Activated CD8-positive, alpha-beta T cell treated with anti-CD3 and anti-CD28 coated beads, Interleukin-2, amount 10 ng/mL, durations not matched to agents 7 days and 5 days (primary cell): ENCODE measurements at regions of chr2 and their contacts with region 1.

Region 1: GRCh38 chr2:95389245-95390119 is 13.0 kb upstream of the FAHD2A start:
- DNase-seq: peak; percentile 69
- ATAC-seq: peak; percentile 82
- H3K4me3 Mint-ChIP-seq: no peak overlapping the region
- H3K27ac Mint-ChIP-seq: no peak overlapping the region
- H3K4me1 Mint-ChIP-seq: no peaks in the 10 kb centered on the region
- H3K27me3 Mint-ChIP-seq: peaks cover 2% of the 10 kb centered on the region

Region 2: GRCh38 chr2:95379371-95379831 is 10.1 kb before region 1 on chr2:
- CTCF ChIA-PET with region 1: interaction called, 11 read pairs
- POLR2A ChIA-PET with region 1: no interaction called
- DNase-seq: no peak
- ATAC-seq: peak; percentile 38
- H3K4me3 Mint-ChIP-seq: no peak overlapping the region
- H3K27ac Mint-ChIP-seq: no peak overlapping the region
- H3K4me1 Mint-ChIP-seq: peaks cover 7% of the 10 kb centered on the region
- H3K27me3 Mint-ChIP-seq: no peaks in the 10 kb centered on the region

Region 3: DNA sequence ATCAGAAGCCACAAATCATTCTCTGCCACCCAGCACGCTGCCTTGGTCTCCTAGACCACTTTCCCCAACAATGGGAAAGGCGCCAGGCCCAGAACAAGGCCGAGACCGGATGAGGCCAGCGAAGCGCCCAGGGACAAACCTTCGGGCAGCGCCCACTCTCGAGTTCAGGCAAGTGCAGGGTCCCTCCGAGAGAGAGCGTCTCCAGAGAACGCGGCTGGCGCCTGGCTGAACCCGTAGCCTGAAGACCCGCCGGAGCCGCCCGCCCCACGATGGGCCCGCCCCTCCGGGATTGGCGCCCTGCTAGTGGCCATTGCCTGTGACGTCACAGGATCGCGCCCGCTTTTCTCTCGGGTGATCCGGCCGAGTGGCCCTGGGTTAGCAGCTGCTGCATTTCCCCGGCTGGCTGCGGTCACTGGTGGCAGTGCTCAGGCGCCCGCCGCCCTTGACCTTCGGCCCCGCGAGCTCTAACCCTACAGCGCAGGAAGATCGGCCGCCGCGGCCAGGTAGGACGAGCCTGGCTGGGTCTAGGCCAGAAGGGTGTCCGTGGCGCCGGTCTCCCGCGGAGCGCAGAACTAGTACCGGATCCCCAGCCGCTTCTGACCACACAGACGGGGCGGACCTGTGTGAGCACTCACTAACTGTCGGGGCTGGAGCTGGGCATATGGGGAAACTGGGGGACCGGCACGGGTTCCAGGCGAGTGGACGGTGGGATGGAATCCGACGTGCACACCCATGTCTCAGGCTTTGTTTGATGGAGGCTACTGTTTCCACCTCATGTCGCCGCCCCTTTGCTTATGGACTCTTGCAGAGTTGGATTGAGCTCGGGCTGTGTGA is 13.1 kb after region 1 on chr2 and contains the start of gene FAHD2A:
- CTCF ChIA-PET with region 1: interaction called, 39 read pairs
- POLR2A ChIA-PET with region 1: no interaction called
- DNase-seq: peak; percentile 97
- ATAC-seq: peak; percentile 97
- H3K4me3 Mint-ChIP-seq: peak within 1 kb of the TSS; percentile 99
- H3K27ac Mint-ChIP-seq: peak within 1 kb of the TSS; percentile 97
- H3K4me1 Mint-ChIP-seq: peaks cover 20% of the 10 kb centered on the region
- H3K27me3 Mint-ChIP-seq: no peaks in the 10 kb centered on the region
- total RNA-seq, gene FAHD2A: 29.2 to 30.5 TPM